ENCODE measurements at regions of chr17 and their contacts with region 1.

Region 1: DNA sequence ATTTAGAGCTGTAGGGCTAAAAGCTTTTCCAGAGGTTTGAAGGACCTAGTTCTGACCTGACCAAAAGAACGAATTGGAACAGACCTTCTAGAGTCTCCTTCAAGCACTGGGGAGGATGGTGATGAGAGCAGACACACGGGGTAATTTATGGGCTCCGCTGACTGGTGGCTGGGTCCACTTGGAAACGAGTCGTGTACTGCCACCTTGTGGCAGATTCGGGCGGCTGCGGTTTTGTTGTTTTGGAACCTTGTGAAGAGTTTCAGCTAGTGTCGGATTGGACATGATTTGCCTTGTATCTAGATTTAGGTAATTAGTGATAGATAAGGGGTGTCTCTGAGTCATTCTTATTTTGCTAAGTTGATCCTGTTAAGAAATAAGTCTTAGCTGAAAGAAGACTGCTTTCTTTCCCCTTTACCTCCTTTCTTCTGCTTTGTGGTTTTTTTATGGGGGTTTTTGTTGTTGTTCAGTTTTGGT is 98.9 kb downstream of the AATF start:
- DNase-seq: peak; percentile 92
- ATAC-seq: peak; percentile 85
- H3K4me3 Mint-ChIP-seq: no peak overlapping the region
- H3K27ac Mint-ChIP-seq: peak overlapping the region; percentile 82
- H3K4me1 Mint-ChIP-seq: peaks cover 57% of the 10 kb centered on the region
- H3K27me3 Mint-ChIP-seq: no peaks in the 10 kb centered on the region
- CTCF ChIP-seq: peak; percentile 85

Region 2: DNA sequence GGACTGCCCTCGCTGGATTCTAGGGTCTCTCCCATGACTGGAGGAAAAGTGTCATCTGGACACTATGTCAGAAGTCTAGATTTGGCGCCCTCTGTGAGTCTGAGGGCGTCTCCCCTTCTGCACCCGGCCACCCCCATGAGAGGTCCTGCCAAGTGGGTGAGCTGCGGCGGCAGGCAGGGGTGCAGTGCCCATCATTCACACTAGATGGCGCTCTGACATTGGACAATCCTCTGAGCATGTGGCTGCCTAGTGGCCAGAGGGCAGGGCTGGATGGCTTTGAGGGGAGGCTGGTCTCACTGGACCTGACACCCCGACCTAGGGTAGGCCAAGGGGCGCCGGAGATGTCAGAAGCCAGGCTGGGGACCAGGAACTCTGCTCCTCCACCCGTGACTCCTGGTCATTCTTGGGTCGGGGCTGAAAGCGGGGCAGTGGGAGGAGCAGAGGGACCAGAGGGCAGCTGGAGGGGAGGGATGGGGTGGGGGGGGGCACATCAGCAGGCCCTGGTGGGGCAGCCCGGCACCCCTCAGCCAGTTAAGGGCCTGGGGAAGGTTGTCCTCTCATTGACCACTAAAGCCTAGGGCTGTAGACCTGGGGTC is 418.3 kb before region 1 on chr17:
- CTCF ChIA-PET with region 1: interaction called, 16 read pairs
- POLR2A ChIA-PET with region 1: interaction called, 3 read pairs
- DNase-seq: peak; percentile 90
- ATAC-seq: peak; percentile 70
- H3K4me3 Mint-ChIP-seq: no peak overlapping the region
- H3K27ac Mint-ChIP-seq: no peak overlapping the region
- H3K4me1 Mint-ChIP-seq: peaks cover 35% of the 10 kb centered on the region
- H3K27me3 Mint-ChIP-seq: peaks cover 18% of the 10 kb centered on the region
- CTCF ChIP-seq: peak; percentile 100

Region 3: DNA sequence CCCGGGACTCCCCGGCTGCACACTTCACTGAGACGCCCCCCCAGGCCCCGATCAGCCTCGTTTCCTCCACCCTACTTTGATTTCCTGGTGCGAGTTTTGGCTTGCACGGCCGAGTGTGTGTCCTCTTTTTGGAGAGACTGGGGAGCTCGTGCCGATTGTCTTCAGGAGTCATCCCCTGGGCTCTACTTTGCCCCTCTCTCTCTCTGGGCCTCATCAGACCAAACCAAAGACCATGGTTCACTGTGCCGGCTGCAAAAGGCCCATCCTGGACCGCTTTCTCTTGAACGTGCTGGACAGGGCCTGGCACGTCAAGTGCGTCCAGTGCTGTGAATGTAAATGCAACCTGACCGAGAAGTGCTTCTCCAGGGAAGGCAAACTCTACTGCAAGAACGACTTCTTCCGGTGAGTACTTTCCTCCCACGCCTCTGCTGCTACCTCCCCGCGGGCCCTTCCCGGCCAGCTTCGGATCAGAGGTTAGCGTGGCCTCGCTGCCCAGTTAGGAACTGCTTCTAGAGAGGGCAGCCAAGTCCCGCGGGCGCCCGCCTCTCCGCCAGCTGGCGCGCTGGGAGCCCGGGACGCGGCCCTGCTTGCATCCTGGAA is 109.6 kb before region 1 on chr17:
- CTCF ChIA-PET with region 1: interaction called, 12 read pairs
- POLR2A ChIA-PET with region 1: no interaction called
- DNase-seq: peak; percentile 50
- ATAC-seq: no peak
- H3K4me3 Mint-ChIP-seq: peak overlapping the region; percentile 78
- H3K27ac Mint-ChIP-seq: no peak overlapping the region
- H3K4me1 Mint-ChIP-seq: peaks cover 68% of the 10 kb centered on the region
- H3K27me3 Mint-ChIP-seq: peaks cover 99% of the 10 kb centered on the region
- CTCF ChIP-seq: no peak

Region 4: DNA sequence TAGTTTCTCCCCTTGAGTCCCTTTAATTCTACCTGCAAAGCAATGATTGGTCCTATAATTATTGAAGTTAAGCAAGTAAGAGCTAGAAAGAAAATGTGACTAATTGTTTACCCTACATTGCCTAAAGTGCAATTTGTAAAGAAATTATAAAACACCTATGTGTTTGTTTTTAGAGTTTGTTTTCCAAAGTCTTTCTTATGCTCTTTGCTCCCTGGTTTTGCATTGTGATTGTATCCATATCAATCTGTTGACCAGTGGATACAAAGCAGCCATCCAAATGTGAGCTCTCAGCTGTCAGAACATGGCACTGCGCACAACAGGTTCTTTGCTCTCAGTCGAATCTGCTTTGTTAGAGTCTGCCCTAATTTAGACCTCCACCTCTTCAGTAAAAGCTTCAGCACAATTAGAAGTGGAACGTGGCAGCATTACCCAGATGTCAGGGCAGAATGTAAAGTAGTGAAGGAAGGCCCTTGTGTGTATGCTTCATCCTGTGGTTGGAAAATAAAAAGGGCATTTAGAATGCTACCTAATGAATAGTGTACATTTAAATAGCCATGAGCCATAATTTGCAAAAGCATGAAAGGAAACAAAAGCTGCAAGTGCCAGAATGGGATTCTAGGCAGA is 28.4 kb before region 1 on chr17:
- CTCF ChIA-PET with region 1: interaction called, 15 read pairs
- POLR2A ChIA-PET with region 1: no interaction called
- DNase-seq: no peak
- ATAC-seq: no peak
- H3K4me3 Mint-ChIP-seq: no peak overlapping the region
- H3K27ac Mint-ChIP-seq: peak overlapping the region; percentile 63
- H3K4me1 Mint-ChIP-seq: peaks cover 29% of the 10 kb centered on the region
- H3K27me3 Mint-ChIP-seq: no peaks in the 10 kb centered on the region
- CTCF ChIP-seq: no peak

Region 5: GRCh38 chr17:37081287-37081686 is 33.6 kb after region 1 on chr17:
- CTCF ChIA-PET with region 1: interaction called, 30 read pairs
- POLR2A ChIA-PET with region 1: no interaction called
- DNase-seq: no peak
- ATAC-seq: peak; percentile 57
- H3K4me3 Mint-ChIP-seq: no peak overlapping the region
- H3K27ac Mint-ChIP-seq: peak overlapping the region; percentile 60; the same call in 1 of the 2 replicates
- H3K4me1 Mint-ChIP-seq: peaks cover 37% of the 10 kb centered on the region
- H3K27me3 Mint-ChIP-seq: no peaks in the 10 kb centered on the region
- CTCF ChIP-seq: no peak

Region 6: DNA sequence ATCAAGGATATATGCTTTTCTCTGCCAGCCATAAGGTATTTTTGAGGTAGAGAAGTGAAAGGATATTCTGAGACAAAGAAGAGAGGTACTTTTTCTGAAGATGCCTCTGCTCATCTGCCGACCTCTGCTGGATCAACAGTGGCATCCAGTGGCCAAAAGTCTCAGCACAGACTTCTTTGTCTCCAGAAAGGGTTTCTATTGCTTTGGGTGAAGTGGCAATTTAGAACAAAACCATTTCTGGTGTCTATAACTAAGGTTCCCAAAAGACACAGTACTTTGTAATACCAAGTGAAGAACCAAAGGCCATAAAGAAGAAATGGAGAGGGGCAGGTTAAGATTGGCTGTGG is 172.9 kb after region 1 on chr17:
- CTCF ChIA-PET with region 1: no interaction called
- POLR2A ChIA-PET with region 1: no interaction called
- DNase-seq: peak; percentile 41
- ATAC-seq: peak; percentile 59
- H3K4me3 Mint-ChIP-seq: no peak overlapping the region
- H3K27ac Mint-ChIP-seq: peak overlapping the region; percentile 93
- H3K4me1 Mint-ChIP-seq: peaks cover 28% of the 10 kb centered on the region
- H3K27me3 Mint-ChIP-seq: no peaks in the 10 kb centered on the region
- CTCF ChIP-seq: no peak

Measured in WTC11 (cell line).